Aorta (tissue), 5 donors: ENCODE measurements at regions of chr13 and their contacts with region 1.

Region 1: GRCh38 chr13:29850224-29850898 is at the start of gene UBL3:
- DNase-seq: peak; percentile 98
- ATAC-seq: peak; percentile 96
- H3K4me3 ChIP-seq: peak within 1 kb of the TSS; percentile 71 to 85
- H3K27ac ChIP-seq: peak within 1 kb of the TSS; percentile 86 to 96
- H3K4me1 ChIP-seq: no peaks in the 10 kb centered on the region
- H3K27me3 ChIP-seq: no peaks in the 10 kb centered on the region
- total RNA-seq, gene UBL3: 24.2 to 29.4 TPM

Region 2: GRCh38 chr13:29508130-29508875 is 342.1 kb before region 1 on chr13:
- intact Hi-C with region 1: loop called in 1 of 2 experiments (anchors 10 kb)
- DNase-seq: peak; percentile 87 to 94
- ATAC-seq: peak; percentile 87
- H3K4me3 ChIP-seq: no peak overlapping the region
- H3K27ac ChIP-seq: no peak overlapping the region
- H3K4me1 ChIP-seq: no peaks in the 10 kb centered on the region
- H3K27me3 ChIP-seq: no peaks in the 10 kb centered on the region

Region 3: DNA sequence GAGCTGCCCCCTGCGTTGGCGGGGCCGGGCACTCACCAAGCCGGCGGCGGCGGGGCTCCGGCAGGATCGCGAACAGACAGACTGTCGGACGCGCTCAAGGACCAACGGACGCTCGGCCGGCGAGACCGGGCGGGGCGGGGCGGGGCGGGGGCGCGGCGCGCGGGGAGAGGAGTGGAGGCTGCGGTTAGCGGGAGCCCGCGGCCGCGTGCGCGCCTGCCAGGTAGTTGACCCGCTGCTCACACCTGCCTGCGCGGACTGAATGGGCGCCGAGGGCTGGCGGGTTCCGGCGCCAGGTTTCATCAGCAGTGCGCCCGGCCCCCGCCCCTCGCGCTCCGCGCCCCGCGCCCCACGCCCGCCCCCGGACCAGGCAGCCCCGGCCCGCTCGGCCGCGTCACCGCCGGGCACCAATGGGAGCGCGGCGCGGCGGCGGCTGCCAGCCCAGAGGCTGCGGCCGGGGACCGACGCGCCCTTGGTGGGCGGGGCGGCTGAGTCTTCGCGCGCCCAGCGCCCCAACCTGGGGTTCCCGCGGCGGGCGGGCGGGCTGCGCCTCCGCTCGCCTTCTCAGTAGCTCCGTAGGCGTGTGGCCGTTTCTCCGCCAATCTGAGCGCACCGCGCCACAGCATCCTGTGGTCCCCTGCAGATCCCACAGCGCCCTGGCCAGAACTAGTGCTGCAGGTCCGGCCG is 254.8 kb before region 1 on chr13 and contains the start of gene SLC7A1:
- intact Hi-C with region 1: loop called (anchors 5 kb)
- DNase-seq: peak; percentile 84 to 94
- ATAC-seq: peak; percentile 92
- H3K4me3 ChIP-seq: peak within 1 kb of the TSS; percentile 93 to 96
- H3K27ac ChIP-seq: peak within 1 kb of the TSS; percentile 81 to 87
- H3K4me1 ChIP-seq: no peaks in the 10 kb centered on the region
- H3K27me3 ChIP-seq: no peaks in the 10 kb centered on the region
- total RNA-seq, gene SLC7A1: 29.3 to 52.1 TPM

Region 4: GRCh38 chr13:29771247-29771646 is 79.1 kb before region 1 on chr13:
- intact Hi-C with region 1: loop called in 1 of 2 experiments (anchors 5 kb)
- DNase-seq: no peak
- ATAC-seq: no peak
- H3K4me3 ChIP-seq: no peak overlapping the region
- H3K27ac ChIP-seq: no peak overlapping the region
- H3K4me1 ChIP-seq: no peaks in the 10 kb centered on the region
- H3K27me3 ChIP-seq: no peaks in the 10 kb centered on the region

Region 5: GRCh38 chr13:29923554-29924481 is 73.5 kb after region 1 on chr13:
- intact Hi-C with region 1: loop called (anchors 2 kb)
- DNase-seq: peak; percentile 93 to 94
- ATAC-seq: peak; percentile 93
- H3K4me3 ChIP-seq: no peak overlapping the region
- H3K27ac ChIP-seq: peak overlapping the region; percentile 92 to 100
- H3K4me1 ChIP-seq: peaks cover 0 to 9% of the 10 kb centered on the region in 2 donors
- H3K27me3 ChIP-seq: no peaks in the 10 kb centered on the region